Naive thymus-derived CD4-positive, alpha-beta T cell (primary cell): ENCODE measurements at regions of chr20 and their contacts with region 1.

Region 1: GRCh38 chr20:32652739-32653526 is 20.8 kb downstream of the C20orf203 start:
- DNase-seq: peak; percentile 77 to 92 (median 86)
- ATAC-seq: peak; percentile 97
- H3K4me3 ChIP-seq: no peak overlapping the region
- H3K4me3 Mint-ChIP-seq: peak overlapping the region in 9 of 10 donors; percentile 26 to 65 (median 57)
- H3K27ac ChIP-seq: no peak overlapping the region
- H3K27ac Mint-ChIP-seq: peak overlapping the region in 4 of 9 donors; percentile 15 to 59 (median 32)
- H3K4me1 ChIP-seq: peaks cover 5 to 6% of the 10 kb centered on the region in 2 donors
- H3K4me1 Mint-ChIP-seq: peaks cover 0 to 14% (median 12%) of the 10 kb centered on the region in 7 donors
- H3K27me3 ChIP-seq: no peaks in the 10 kb centered on the region
- H3K27me3 Mint-ChIP-seq: peaks cover 0 to 4% (median 0%) of the 10 kb centered on the region in 5 donors

Region 2: GRCh38 chr20:31822421-31823330 is 830.3 kb before region 1 on chr20:
- CTCF ChIA-PET with region 1: no interaction called
- POLR2A ChIA-PET with region 1: no interaction called
- intact Hi-C with region 1: loop called in 1 of 2 experiments (anchors 1 kb)
- DNase-seq: peak; percentile 40 to 80 (median 73)
- ATAC-seq: peak; percentile 91
- H3K4me3 ChIP-seq: no peak overlapping the region
- H3K4me3 Mint-ChIP-seq: peak overlapping the region in 5 of 10 donors; percentile 27 to 47 (median 30)
- H3K27ac ChIP-seq: no peak overlapping the region
- H3K27ac Mint-ChIP-seq: peak overlapping the region in 2 of 9 donors; percentile 47 to 59
- H3K4me1 ChIP-seq: peaks cover 0 to 4% of the 10 kb centered on the region in 2 donors
- H3K4me1 Mint-ChIP-seq: peaks cover 0 to 9% (median 0%) of the 10 kb centered on the region in 7 donors
- H3K27me3 ChIP-seq: no peaks in the 10 kb centered on the region
- H3K27me3 Mint-ChIP-seq: peaks cover 0 to 4% (median 0%) of the 10 kb centered on the region in 5 donors

Region 3: GRCh38 chr20:32031007-32031958 is 621.6 kb before region 1 on chr20:
- CTCF ChIA-PET with region 1: interaction called, 4 read pairs
- POLR2A ChIA-PET with region 1: no interaction called
- intact Hi-C with region 1: loop called in 1 of 2 experiments (anchors 1 kb)
- DNase-seq: peak; percentile 22 to 67 (median 50)
- ATAC-seq: peak; percentile 68
- H3K4me3 ChIP-seq: peak overlapping the region; percentile 35
- H3K4me3 Mint-ChIP-seq: peak overlapping the region in 8 of 10 donors; percentile 29 to 66 (median 52)
- H3K27ac ChIP-seq: no peak overlapping the region
- H3K27ac Mint-ChIP-seq: no peak overlapping the region
- H3K4me1 ChIP-seq: peaks cover 0 to 4% of the 10 kb centered on the region in 2 donors
- H3K4me1 Mint-ChIP-seq: peaks cover 0 to 4% (median 0%) of the 10 kb centered on the region in 7 donors
- H3K27me3 ChIP-seq: no peaks in the 10 kb centered on the region
- H3K27me3 Mint-ChIP-seq: peaks cover 16 to 62% (median 29%) of the 10 kb centered on the region in 5 donors

Region 4: DNA sequence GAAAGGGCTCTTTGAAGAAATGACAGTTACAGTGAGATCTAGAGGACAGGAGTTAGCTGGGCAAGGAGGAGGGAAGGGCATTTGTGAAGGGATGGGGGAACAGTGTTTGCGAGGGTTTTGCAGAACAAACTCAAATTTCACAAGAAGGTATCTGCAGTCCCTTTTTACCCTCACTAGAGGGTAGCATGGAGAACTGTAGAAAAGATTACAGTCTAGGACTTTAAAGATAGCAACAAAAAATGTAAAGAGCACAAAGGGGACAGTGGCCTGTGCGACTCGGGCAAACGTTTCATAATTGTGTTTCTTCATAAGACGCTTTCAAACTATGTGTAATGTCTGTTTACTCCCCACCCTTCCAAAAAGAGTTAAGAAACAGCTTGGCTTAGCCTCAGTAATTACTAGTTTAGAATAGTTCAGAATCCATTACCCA is 316.0 kb before region 1 on chr20:
- CTCF ChIA-PET with region 1: interaction called, 5 read pairs
- POLR2A ChIA-PET with region 1: no interaction called
- intact Hi-C with region 1: loop called (anchors 1 kb)
- DNase-seq: peak in 7 of 9 donors; percentile 18 to 57 (median 35)
- ATAC-seq: peak; percentile 79
- H3K4me3 ChIP-seq: no peak overlapping the region
- H3K4me3 Mint-ChIP-seq: no peak overlapping the region
- H3K27ac ChIP-seq: no peak overlapping the region
- H3K27ac Mint-ChIP-seq: peak overlapping the region in 3 of 9 donors; percentile 5 to 75 (median 18)
- H3K4me1 ChIP-seq: peaks cover 5 to 13% of the 10 kb centered on the region in 2 donors
- H3K4me1 Mint-ChIP-seq: peaks cover 5 to 27% (median 8%) of the 10 kb centered on the region in 7 donors
- H3K27me3 ChIP-seq: no peaks in the 10 kb centered on the region
- H3K27me3 Mint-ChIP-seq: no peaks in the 10 kb centered on the region

Region 5: GRCh38 chr20:32470025-32470861 is 182.7 kb before region 1 on chr20:
- CTCF ChIA-PET with region 1: interaction called, 6 read pairs
- POLR2A ChIA-PET with region 1: no interaction called
- intact Hi-C with region 1: loop called in 1 of 2 experiments (anchors 5 kb)
- DNase-seq: peak in 2 of 9 donors; percentile 24 to 31
- ATAC-seq: peak; percentile 58
- H3K4me3 ChIP-seq: no peak overlapping the region
- H3K4me3 Mint-ChIP-seq: peak overlapping the region in 1 of 10 donors; percentile 1
- H3K27ac ChIP-seq: peak overlapping the region; percentile 30
- H3K27ac Mint-ChIP-seq: peak overlapping the region in 8 of 9 donors; percentile 36 to 89 (median 79)
- H3K4me1 ChIP-seq: no peaks in the 10 kb centered on the region
- H3K4me1 Mint-ChIP-seq: peaks cover 4 to 23% (median 17%) of the 10 kb centered on the region in 7 donors
- H3K27me3 ChIP-seq: no peaks in the 10 kb centered on the region
- H3K27me3 Mint-ChIP-seq: no peaks in the 10 kb centered on the region

Region 6: GRCh38 chr20:32521780-32522525 is 131.0 kb before region 1 on chr20:
- CTCF ChIA-PET with region 1: interaction called, 169 read pairs
- POLR2A ChIA-PET with region 1: interaction called, 60 read pairs
- intact Hi-C with region 1: loop called (anchors 1 kb)
- DNase-seq: peak; percentile 50 to 76 (median 63)
- ATAC-seq: peak; percentile 89
- H3K4me3 ChIP-seq: peak overlapping the region; percentile 27
- H3K4me3 Mint-ChIP-seq: peak overlapping the region in 9 of 10 donors; percentile 17 to 72 (median 53)
- H3K27ac ChIP-seq: peak overlapping the region; percentile 60
- H3K27ac Mint-ChIP-seq: peak overlapping the region; percentile 63 to 95 (median 90)
- H3K4me1 ChIP-seq: peaks cover 36 to 65% of the 10 kb centered on the region in 2 donors
- H3K4me1 Mint-ChIP-seq: peaks cover 39 to 77% (median 67%) of the 10 kb centered on the region in 7 donors
- H3K27me3 ChIP-seq: no peaks in the 10 kb centered on the region
- H3K27me3 Mint-ChIP-seq: no peaks in the 10 kb centered on the region

Region 7: GRCh38 chr20:32743237-32744112 is 90.5 kb after region 1 on chr20 and contains the start of gene COMMD7:
- CTCF ChIA-PET with region 1: no interaction called
- POLR2A ChIA-PET with region 1: no interaction called
- intact Hi-C with region 1: no loop called
- DNase-seq: peak; percentile 48 to 72 (median 63)
- ATAC-seq: peak; percentile 83
- H3K4me3 ChIP-seq: peak within 1 kb of the TSS; percentile 96
- H3K4me3 Mint-ChIP-seq: peak within 1 kb of the TSS; percentile 93 to 100 (median 96)
- H3K27ac ChIP-seq: peak within 1 kb of the TSS; percentile 86
- H3K27ac Mint-ChIP-seq: peak within 1 kb of the TSS; percentile 93 to 98 (median 97)
- H3K4me1 ChIP-seq: peaks cover 18% of the 10 kb centered on the region in 2 donors
- H3K4me1 Mint-ChIP-seq: peaks cover 6 to 52% (median 35%) of the 10 kb centered on the region in 7 donors
- H3K27me3 ChIP-seq: no peaks in the 10 kb centered on the region
- H3K27me3 Mint-ChIP-seq: no peaks in the 10 kb centered on the region
- total RNA-seq, gene COMMD7: 31.5 to 66.3 (median 40.3) TPM

Region 8: DNA sequence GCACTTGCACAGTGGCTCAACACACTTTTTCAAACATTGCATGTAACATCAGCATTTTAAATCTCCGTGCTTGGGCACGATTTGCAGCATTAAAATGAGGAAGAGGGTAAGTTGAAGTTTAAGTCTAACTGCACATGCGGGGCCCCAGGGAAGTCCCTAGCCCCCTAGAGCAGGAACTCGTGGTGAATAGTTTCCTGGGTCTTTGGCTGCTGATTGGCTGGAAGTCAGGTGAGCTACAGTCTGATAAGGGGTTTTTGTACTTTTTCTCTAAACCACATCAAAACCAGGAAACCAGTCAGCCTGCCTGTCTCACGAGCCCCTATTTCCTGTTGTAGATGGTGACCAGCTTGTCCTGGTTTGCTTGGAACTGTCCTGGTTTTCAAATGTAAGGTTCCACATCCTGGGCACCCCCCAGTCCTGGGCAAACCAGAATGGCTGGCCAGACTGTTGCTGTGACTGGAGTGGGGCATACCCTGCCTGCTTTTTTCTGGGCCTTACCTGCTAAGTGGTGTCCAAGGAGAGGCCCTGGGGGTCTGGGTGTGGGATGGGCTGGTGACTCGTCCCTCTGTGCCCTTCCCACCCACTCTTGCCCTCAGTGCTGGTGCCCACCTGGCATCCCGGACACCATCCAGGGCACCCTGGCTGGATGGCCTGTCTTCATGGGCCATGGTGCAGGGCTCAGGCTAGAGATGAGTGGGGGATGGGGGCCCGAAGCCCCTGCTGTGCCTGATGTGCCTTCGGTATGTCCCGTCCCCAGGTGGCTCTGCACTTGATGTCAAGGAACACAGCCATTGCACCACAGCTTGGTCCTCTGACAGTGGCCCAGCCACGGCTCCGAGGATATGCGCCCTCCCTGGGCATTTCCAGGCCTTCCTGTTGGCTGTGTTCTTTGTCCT is 319.5 kb after region 1 on chr20:
- CTCF ChIA-PET with region 1: no interaction called
- POLR2A ChIA-PET with region 1: no interaction called
- intact Hi-C with region 1: no loop called
- DNase-seq: peak; percentile 31 to 96 (median 94)
- ATAC-seq: peak; percentile 90
- H3K4me3 ChIP-seq: peak overlapping the region; percentile 53
- H3K4me3 Mint-ChIP-seq: peak overlapping the region in 1 of 10 donors; percentile 54
- H3K27ac ChIP-seq: peak overlapping the region; percentile 85
- H3K27ac Mint-ChIP-seq: no peak overlapping the region
- H3K4me1 ChIP-seq: peaks cover 73 to 92% of the 10 kb centered on the region in 2 donors
- H3K4me1 Mint-ChIP-seq: peaks cover 13 to 56% (median 46%) of the 10 kb centered on the region in 7 donors
- H3K27me3 ChIP-seq: no peaks in the 10 kb centered on the region
- H3K27me3 Mint-ChIP-seq: no peaks in the 10 kb centered on the region

Region 9: GRCh38 chr20:33076662-33077372 is 423.9 kb after region 1 on chr20:
- CTCF ChIA-PET with region 1: no interaction called
- POLR2A ChIA-PET with region 1: no interaction called
- intact Hi-C with region 1: no loop called
- DNase-seq: peak in 5 of 9 donors; percentile 13 to 51 (median 33)
- ATAC-seq: no peak
- H3K4me3 ChIP-seq: no peak overlapping the region
- H3K4me3 Mint-ChIP-seq: no peak overlapping the region
- H3K27ac ChIP-seq: no peak overlapping the region
- H3K27ac Mint-ChIP-seq: no peak overlapping the region
- H3K4me1 ChIP-seq: no peaks in the 10 kb centered on the region
- H3K4me1 Mint-ChIP-seq: peaks cover 0 to 22% (median 11%) of the 10 kb centered on the region in 7 donors
- H3K27me3 ChIP-seq: no peaks in the 10 kb centered on the region
- H3K27me3 Mint-ChIP-seq: peaks cover 0 to 7% (median 0%) of the 10 kb centered on the region in 5 donors